ENCODE measurements at regions of chr4 and their contacts with region 1.

Region 1: DNA sequence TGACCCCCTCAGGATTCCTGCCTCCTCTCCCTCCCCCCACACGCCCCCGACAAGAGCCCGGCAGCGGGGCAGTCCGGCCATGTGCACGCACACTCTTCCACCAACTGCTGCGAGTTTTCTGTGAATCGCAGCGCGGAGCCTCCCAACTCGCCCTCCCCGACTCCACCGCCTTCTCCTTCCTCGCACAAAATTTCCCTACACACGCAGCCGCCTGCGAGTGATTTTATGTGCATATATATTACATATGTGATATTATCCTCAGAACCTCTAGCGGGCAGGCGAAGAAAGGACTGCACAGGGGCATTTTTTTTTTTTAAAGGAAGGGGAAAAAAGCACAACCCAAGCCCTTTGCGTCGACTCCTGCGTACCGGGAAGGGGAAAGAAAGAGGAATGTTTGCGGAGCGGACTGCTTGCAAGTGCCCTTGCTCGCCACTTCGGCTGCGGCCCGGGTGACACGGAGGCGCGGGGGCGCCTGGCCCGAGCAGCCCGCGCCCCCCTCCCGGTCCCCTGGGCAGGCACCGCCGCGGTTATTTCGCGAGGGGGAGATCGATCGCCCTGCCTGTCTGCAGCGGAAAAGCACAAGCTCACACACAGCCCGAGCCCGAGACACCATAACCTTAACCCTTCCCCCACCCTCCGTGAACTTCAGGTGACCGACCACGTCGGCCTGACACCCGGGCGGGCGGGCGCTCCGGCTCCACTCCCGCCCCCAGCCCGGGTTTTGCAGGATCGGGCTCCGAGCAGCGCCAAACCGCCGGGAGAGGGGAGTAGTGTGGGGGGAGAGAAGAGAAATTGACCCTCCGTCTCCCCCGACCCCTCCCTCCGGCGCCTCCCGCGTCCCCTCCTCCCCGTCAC is 2.3 kb downstream of the ZNF827 start:
- DNase-seq: peak; percentile 78 to 87
- ATAC-seq: peak; percentile 73
- H3K4me3 ChIP-seq: peak overlapping the region; percentile 92 to 100
- H3K27ac ChIP-seq: peak overlapping the region; percentile 74 to 99
- H3K4me1 ChIP-seq: peaks cover 4 to 5% of the 10 kb centered on the region in 2 donors
- H3K27me3 ChIP-seq: no peaks in the 10 kb centered on the region

Region 2: DNA sequence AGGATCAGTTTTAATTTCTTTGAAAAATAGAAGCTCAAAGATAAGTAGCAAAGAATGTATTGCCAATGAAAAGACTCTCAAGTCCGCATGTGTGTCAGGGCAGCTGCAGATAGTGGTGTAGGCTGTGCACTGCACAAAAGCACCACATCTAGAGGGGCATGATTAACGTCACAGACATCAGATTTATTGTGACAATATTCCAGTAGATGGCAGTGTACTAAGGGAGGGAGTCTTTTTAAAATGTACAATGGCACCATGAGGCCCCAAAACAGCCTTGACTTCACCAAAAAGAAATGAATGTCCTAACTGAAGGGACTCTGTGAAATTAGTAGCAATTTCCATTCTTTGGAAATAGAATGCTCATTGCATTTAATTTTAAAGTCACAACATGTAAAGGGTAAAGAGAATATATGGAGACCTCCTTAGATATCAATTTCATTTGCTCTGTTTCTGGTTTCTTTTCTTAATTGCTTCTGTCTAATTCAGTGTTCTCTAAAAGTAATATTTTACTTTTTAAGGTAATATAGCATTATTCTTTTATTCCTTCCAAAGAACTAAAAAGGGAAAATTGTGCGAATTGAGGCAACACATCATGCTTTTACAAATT is 96.1 kb before region 1 on chr4:
- intact Hi-C with region 1: loop called in 1 of 2 experiments (anchors 10 kb)
- DNase-seq: no peak
- ATAC-seq: no peak
- H3K4me3 ChIP-seq: no peak overlapping the region
- H3K27ac ChIP-seq: no peak overlapping the region
- H3K4me1 ChIP-seq: peaks cover 0 to 2% of the 10 kb centered on the region in 2 donors
- H3K27me3 ChIP-seq: no peaks in the 10 kb centered on the region

Region 3: GRCh38 chr4:145887241-145887991 is 49.0 kb before region 1 on chr4:
- intact Hi-C with region 1: loop called (anchors 5 kb)
- DNase-seq: no peak
- ATAC-seq: peak; percentile 71
- H3K4me3 ChIP-seq: no peak overlapping the region
- H3K27ac ChIP-seq: peak overlapping the region; percentile 36 to 91
- H3K4me1 ChIP-seq: peaks cover 0 to 4% of the 10 kb centered on the region in 2 donors
- H3K27me3 ChIP-seq: no peaks in the 10 kb centered on the region

Region 4: GRCh38 chr4:146087856-146088255 is 151.5 kb after region 1 on chr4:
- intact Hi-C with region 1: no loop called
- DNase-seq: no peak
- ATAC-seq: no peak
- H3K4me3 ChIP-seq: no peak overlapping the region
- H3K27ac ChIP-seq: no peak overlapping the region
- H3K4me1 ChIP-seq: no peaks in the 10 kb centered on the region
- H3K27me3 ChIP-seq: no peaks in the 10 kb centered on the region

Region 5: DNA sequence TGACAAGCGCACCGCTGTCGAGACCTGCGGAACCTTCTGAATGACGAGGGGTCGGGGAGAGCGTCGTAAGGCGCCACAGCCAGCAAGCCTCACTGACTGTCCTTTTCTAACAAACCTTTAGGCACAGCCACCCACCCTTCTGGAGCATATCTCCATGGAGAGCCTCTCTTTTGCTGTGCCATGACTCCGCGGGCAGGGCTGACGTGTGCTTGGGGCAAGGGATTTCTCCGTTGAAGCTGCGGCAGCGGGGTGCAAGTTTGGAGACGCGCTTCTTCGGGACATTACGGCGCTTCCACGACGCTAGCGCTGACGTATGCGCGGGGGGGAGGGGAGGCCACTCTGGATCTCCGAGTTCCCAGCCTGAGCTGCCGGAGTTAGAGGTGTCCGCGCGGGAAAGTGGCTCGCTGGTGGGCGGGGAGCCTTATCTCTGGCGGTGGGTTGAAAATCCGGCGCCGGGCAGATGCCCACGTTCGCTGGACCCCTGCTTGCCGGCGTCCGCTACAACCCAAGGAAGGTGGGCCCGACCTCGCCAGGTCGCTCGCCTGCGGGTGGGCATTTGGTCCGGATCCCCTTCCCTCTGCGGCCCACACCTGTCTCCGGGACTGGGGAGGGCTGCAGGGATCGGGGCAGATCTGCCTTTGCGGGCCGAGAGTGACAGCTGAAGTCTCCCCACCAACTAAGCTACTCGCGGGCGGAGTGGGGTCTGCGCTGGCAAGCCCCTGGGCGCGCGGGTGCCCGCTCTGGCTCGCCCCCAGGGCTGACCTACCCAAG is 585.9 kb after region 1 on chr4:
- intact Hi-C with region 1: loop called in 1 of 2 experiments (anchors 5 kb)
- DNase-seq: peak; percentile 94 to 97
- ATAC-seq: peak; percentile 99
- H3K4me3 ChIP-seq: peak overlapping the region; percentile 34 to 99
- H3K27ac ChIP-seq: no peak overlapping the region
- H3K4me1 ChIP-seq: no peaks in the 10 kb centered on the region
- H3K27me3 ChIP-seq: no peaks in the 10 kb centered on the region

Measured in aorta (tissue), 5 donors.